CD8-positive, alpha-beta memory T cell (primary cell): ENCODE measurements at regions of chr3 and their contacts with region 1.

Region 1: GRCh38 chr3:128607710-128608048 is 42.9 kb downstream of the RPN1 start:
- DNase-seq: no peak
- H3K4me3 ChIP-seq: peak overlapping the region; percentile 61
- H3K4me3 Mint-ChIP-seq: peak overlapping the region in 4 of 7 donors; percentile 5 to 43 (median 24)
- H3K27ac ChIP-seq: no peak overlapping the region
- H3K27ac Mint-ChIP-seq: no peak overlapping the region
- H3K4me1 ChIP-seq: no peaks in the 10 kb centered on the region
- H3K4me1 Mint-ChIP-seq: peaks cover 0 to 2% (median 0%) of the 10 kb centered on the region in 3 donors
- H3K27me3 ChIP-seq: no peaks in the 10 kb centered on the region
- H3K27me3 Mint-ChIP-seq: peaks cover 0 to 5% of the 10 kb centered on the region in 2 donors

Region 2: GRCh38 chr3:128426128-128426921 is 181.4 kb before region 1 on chr3:
- CTCF ChIA-PET with region 1: interaction called, 51 read pairs
- POLR2A ChIA-PET with region 1: interaction called, 4 read pairs
- DNase-seq: peak; percentile 23 to 62 (median 45)
- H3K4me3 ChIP-seq: no peak overlapping the region
- H3K4me3 Mint-ChIP-seq: no peak overlapping the region
- H3K27ac ChIP-seq: no peak overlapping the region
- H3K27ac Mint-ChIP-seq: no peak overlapping the region
- H3K4me1 ChIP-seq: no peaks in the 10 kb centered on the region
- H3K4me1 Mint-ChIP-seq: no peaks in the 10 kb centered on the region
- H3K27me3 ChIP-seq: no peaks in the 10 kb centered on the region
- H3K27me3 Mint-ChIP-seq: peaks cover 12 to 28% of the 10 kb centered on the region in 2 donors

Region 3: DNA sequence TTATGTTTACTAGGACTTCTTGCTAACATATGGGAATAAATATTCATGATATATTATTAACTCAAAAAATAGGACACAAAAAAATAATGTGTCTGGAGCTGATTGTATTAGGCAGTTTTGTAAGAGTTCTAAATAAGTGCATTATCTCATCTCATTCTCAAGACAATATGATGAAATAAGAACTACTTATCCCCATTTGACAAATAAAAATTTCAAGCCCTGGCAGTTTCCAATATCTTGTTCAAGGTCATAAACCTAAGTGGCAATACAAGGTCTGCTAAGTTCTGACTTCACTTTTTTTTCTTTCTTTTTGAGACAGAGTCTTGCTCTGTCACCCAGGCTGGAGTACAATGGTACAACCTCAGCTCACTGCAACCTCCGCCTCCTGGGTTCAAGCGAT is 24.6 kb after region 1 on chr3:
- CTCF ChIA-PET with region 1: no interaction called
- POLR2A ChIA-PET with region 1: no interaction called
- DNase-seq: no peak
- H3K4me3 ChIP-seq: no peak overlapping the region
- H3K4me3 Mint-ChIP-seq: no peak overlapping the region
- H3K27ac ChIP-seq: no peak overlapping the region
- H3K27ac Mint-ChIP-seq: no peak overlapping the region
- H3K4me1 ChIP-seq: no peaks in the 10 kb centered on the region
- H3K4me1 Mint-ChIP-seq: peaks cover 6 to 20% (median 18%) of the 10 kb centered on the region in 3 donors
- H3K27me3 ChIP-seq: no peaks in the 10 kb centered on the region
- H3K27me3 Mint-ChIP-seq: no peaks in the 10 kb centered on the region

Region 4: DNA sequence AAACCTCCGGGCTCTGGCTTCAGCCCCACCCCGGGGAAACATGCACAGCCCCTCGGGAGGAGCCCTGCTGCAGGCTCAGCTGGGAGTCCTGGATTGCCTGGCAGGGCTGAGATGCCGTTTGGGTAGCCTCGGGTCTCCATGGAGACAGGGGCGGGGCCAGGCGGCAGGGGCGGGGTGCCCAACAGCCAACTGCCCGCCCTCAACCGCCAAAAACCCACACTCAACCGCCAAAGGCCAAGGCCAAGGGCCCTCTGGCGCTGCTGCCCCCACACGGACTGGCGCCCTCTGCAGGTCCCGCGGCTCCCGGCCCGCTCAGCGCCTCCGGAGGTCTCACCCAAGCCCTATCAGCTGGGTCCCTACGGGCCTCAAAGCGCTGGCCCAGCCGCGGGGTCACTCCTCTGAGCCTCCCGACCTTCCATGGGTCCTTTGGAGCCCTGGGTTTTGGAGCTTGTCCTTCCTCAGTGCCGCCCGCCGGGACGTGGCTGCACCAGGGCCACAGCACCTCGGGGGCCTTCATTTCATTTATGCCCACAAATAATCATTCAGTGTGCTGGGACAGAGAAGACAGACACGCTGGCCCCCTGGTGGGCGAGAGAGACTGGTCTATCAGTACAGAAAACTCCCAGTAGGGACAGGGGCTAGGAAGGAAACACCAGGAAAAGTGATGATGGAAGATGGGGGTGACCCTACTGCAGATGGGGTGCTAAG is 238.3 kb after region 1 on chr3:
- CTCF ChIA-PET with region 1: interaction called, 3 read pairs
- POLR2A ChIA-PET with region 1: interaction called, 10 read pairs
- DNase-seq: peak; percentile 69 to 84 (median 70)
- H3K4me3 ChIP-seq: peak overlapping the region; percentile 54
- H3K4me3 Mint-ChIP-seq: peak overlapping the region; percentile 46 to 95 (median 83)
- H3K27ac ChIP-seq: peak overlapping the region; percentile 29
- H3K27ac Mint-ChIP-seq: peak overlapping the region in 7 of 8 donors; percentile 27 to 90 (median 79)
- H3K4me1 ChIP-seq: peaks cover 11% of the 10 kb centered on the region
- H3K4me1 Mint-ChIP-seq: peaks cover 8 to 13% (median 12%) of the 10 kb centered on the region in 3 donors
- H3K27me3 ChIP-seq: no peaks in the 10 kb centered on the region
- H3K27me3 Mint-ChIP-seq: no peaks in the 10 kb centered on the region